RWPE1 (cell line): ENCODE measurements at regions of chr16 and their contacts with region 1.

Region 1: DNA sequence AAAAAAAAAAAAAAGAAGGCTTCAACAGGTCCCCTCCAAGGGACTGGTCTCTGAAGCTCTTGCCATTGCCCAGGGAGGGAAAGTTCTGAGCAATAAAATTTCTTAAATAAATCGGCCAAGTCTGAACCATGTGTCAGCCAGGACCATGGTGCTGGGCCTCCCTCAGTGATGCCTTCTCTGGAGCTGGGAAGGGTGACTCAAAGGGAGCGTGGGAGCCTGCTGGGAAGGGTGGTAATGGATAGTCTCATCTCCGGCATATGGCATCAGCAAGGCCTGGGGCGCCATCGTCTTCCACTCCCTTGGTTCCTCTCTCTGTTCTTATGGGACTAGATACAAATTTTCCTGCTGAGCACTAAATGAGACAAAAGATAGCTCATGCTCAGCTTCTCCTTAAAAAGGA is 2.3 kb downstream of the VKORC1 start:
- DNase-seq: no peak
- H3K27ac ChIP-seq: peak overlapping the region; percentile 97
- CTCF ChIP-seq: no peak

Region 2: GRCh38 chr16:31073968-31074813 is 18.1 kb before region 1 on chr16 and contains the starts of genes ZNF646 and ZNF668:
- CTCF ChIA-PET with region 1: interaction called, 3 read pairs
- POLR2A ChIA-PET with region 1: interaction called, 22 read pairs
- DNase-seq: peak; percentile 96
- H3K27ac ChIP-seq: peak within 1 kb of the TSS; percentile 93
- CTCF ChIP-seq: no peak

Region 3: DNA sequence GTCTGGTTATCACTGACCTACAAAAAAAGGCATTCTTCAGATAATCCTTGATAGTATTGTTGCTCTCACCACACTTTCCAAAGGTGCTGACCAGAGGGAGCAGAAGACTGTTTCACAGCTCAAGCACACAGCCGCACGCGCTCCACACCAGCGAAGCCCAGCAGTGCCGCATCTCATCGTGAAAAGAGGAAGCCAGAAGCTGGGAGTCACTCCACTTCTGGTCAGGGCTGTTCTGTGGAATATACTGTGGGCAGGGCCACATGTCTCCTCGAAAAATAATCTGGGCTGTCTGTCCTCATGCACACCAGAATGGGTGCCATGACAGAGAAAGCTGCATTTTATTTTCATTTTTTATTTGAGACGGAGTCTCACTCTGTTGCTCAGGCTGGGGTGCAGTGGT is 64.8 kb after region 1 on chr16:
- CTCF ChIA-PET with region 1: no interaction called
- POLR2A ChIA-PET with region 1: no interaction called
- DNase-seq: no peak
- H3K27ac ChIP-seq: no peak overlapping the region
- CTCF ChIP-seq: no peak